Mammary epithelial cell (primary cell): ENCODE measurements at regions of chr4 and their contacts with region 1.

Region 1: GRCh38 chr4:52824603-52825459 is 37.3 kb upstream of the RASL11B start:
- DNase-seq: no peak
- H3K4me3 ChIP-seq: no peak overlapping the region
- H3K27ac ChIP-seq: no peak overlapping the region
- H3K4me1 ChIP-seq: peaks cover 38% of the 10 kb centered on the region
- H3K27me3 ChIP-seq: no peaks in the 10 kb centered on the region
- CTCF ChIP-seq: no peak

Region 2: GRCh38 chr4:52510939-52511565 is 313.8 kb before region 1 on chr4:
- CTCF ChIA-PET with region 1: no interaction called
- dilution Hi-C with region 1: no loop called
- in situ Hi-C with region 1: no loop called
- intact Hi-C with region 1: no loop called
- DNase-seq: no peak
- H3K4me3 ChIP-seq: no peak overlapping the region
- H3K27ac ChIP-seq: no peak overlapping the region
- H3K4me1 ChIP-seq: no peaks in the 10 kb centered on the region
- H3K27me3 ChIP-seq: no peaks in the 10 kb centered on the region
- CTCF ChIP-seq: no peak

Region 3: GRCh38 chr4:52572936-52573485 is 251.8 kb before region 1 on chr4:
- CTCF ChIA-PET with region 1: no interaction called
- dilution Hi-C with region 1: no loop called
- in situ Hi-C with region 1: loop called in 1 of 2 experiments (anchors 25 kb)
- intact Hi-C with region 1: no loop called
- DNase-seq: peak; percentile 38
- H3K4me3 ChIP-seq: no peak overlapping the region
- H3K27ac ChIP-seq: no peak overlapping the region
- H3K4me1 ChIP-seq: peaks cover 15% of the 10 kb centered on the region
- H3K27me3 ChIP-seq: no peaks in the 10 kb centered on the region
- CTCF ChIP-seq: no peak